Pancreas (tissue), 10 donors: ENCODE measurements at regions of chr9 and their contacts with region 1.

Region 1: DNA sequence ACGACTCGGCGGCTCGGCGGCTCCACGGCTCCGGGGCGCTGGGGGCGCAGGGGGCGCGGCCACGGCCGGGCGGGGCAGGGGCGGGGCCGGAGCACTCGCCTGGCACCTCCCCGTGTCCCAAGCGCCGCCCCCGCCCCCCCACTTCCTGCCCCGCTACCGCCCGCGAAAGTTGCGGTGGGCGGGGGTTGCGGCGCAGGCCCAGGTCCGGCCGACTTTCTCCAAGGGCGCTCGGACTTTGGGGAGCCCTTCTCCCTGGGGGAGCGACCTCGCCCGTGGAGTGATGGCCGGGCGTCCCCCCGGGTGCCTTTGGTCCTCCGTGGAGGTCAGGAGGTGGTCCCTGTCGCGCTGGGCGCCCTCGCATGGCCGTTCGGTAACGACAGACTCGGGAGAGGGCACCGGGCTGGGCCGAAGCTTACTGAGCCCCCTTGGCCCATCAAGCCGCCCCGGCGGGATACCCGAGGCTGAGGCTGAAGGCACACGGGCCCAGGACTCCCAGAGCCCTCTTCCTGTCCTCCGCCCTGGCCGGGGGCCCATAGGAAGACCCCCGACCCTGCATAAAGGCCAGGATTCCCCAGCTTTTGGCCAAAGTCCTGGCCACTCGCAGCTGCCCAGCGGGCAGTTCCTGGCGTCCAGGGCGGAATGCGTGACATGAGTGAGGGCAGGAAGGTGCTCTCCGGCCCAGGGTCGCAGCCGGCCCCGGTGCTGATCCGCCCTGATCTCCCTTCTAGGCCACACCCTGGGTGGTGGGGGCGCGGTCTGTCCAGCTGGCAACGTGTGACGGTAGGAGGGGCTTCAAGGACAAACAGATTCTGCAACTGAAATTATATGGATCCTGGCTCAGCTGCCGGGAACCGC is 883 bp upstream of the VAV2 start:
- DNase-seq: peak; percentile 80 to 93 (median 86)
- ATAC-seq: peak; percentile 63 to 77 (median 68)
- H3K4me3 ChIP-seq: peak overlapping the region; percentile 67 to 80 (median 71)
- H3K27ac ChIP-seq: peak overlapping the region; percentile 84 to 91 (median 89)
- H3K4me1 ChIP-seq: peaks cover 9 to 23% (median 20%) of the 10 kb centered on the region in 3 donors
- H3K27me3 ChIP-seq: no peaks in the 10 kb centered on the region
- CTCF ChIP-seq: no peak

Region 2: DNA sequence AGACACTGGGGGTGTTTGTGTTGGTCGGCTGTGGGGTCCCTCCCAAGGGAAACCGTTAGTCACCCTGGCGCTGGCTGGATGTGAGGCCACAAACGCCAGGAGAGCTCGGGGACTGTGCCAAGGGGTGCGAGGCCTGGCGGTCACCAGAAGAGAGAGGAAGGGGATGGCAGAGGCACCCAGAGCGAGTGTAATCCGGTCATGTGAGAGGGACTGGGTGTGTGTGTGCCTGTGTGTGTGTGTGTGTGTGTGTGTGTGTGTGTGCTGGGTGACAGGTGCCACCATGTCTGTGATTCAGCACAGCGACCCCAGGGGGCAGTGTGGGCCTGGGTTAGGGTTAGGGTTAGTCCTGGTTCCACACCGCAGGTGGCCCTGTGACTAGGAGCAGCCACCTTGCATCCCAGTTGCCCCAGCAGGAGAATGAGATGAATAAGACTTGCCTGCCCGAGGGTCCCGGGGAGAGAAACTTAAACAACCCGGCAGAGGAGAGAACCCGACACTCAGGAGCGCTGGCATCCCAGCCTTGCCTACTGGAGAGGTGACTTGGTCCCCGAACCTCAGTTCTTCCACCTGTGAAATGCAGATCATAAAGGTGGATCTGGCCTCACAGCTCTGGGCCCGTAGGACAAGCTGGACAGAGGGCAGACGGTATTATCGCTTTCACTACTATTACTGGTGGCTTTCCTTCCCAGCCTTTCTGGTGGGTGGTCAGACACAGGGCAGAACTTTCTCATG is 459.9 kb before region 1 on chr9:
- intact Hi-C with region 1: loop called in 1 of 3 experiments (anchors 10 kb)
- DNase-seq: peak in 5 of 6 donors; percentile 65 to 83 (median 69)
- ATAC-seq: peak; percentile 38 to 81 (median 66)
- H3K4me3 ChIP-seq: no peak overlapping the region
- H3K27ac ChIP-seq: no peak overlapping the region
- H3K4me1 ChIP-seq: no peaks in the 10 kb centered on the region
- H3K27me3 ChIP-seq: no peaks in the 10 kb centered on the region
- CTCF ChIP-seq: peak in 1 of 4 donors; percentile 8

Region 3: GRCh38 chr9:133782157-133783130 is 210.6 kb before region 1 on chr9:
- intact Hi-C with region 1: loop called in 1 of 3 experiments (anchors 5 kb)
- DNase-seq: peak; percentile 61 to 84 (median 76)
- ATAC-seq: peak; percentile 53 to 84 (median 80)
- H3K4me3 ChIP-seq: no peak overlapping the region
- H3K27ac ChIP-seq: no peak overlapping the region
- H3K4me1 ChIP-seq: no peaks in the 10 kb centered on the region
- H3K27me3 ChIP-seq: no peaks in the 10 kb centered on the region
- CTCF ChIP-seq: peak; percentile 43 to 74 (median 64)

Region 4: GRCh38 chr9:133792721-133793470 is 200.1 kb before region 1 on chr9:
- intact Hi-C with region 1: loop called in 2 of 3 experiments (anchors 5 to 10 kb)
- DNase-seq: peak in 5 of 6 donors; percentile 64 to 84 (median 70)
- ATAC-seq: peak; percentile 65 to 88 (median 84)
- H3K4me3 ChIP-seq: no peak overlapping the region
- H3K27ac ChIP-seq: no peak overlapping the region
- H3K4me1 ChIP-seq: no peaks in the 10 kb centered on the region
- H3K27me3 ChIP-seq: no peaks in the 10 kb centered on the region
- CTCF ChIP-seq: peak; percentile 64 to 88 (median 76)